ENCODE measurements at regions of chr22 and their contacts with region 1.

Region 1: GRCh38 chr22:30212363-30212995 is 34.1 kb downstream of the LIF start:
- DNase-seq: peak; percentile 93
- H3K4me3 Mint-ChIP-seq: no peak overlapping the region
- H3K27ac Mint-ChIP-seq: peak overlapping the region; percentile 99
- H3K4me1 Mint-ChIP-seq: peaks cover 78% of the 10 kb centered on the region
- H3K27me3 Mint-ChIP-seq: no peaks in the 10 kb centered on the region
- CTCF ChIP-seq: no peak

Region 2: DNA sequence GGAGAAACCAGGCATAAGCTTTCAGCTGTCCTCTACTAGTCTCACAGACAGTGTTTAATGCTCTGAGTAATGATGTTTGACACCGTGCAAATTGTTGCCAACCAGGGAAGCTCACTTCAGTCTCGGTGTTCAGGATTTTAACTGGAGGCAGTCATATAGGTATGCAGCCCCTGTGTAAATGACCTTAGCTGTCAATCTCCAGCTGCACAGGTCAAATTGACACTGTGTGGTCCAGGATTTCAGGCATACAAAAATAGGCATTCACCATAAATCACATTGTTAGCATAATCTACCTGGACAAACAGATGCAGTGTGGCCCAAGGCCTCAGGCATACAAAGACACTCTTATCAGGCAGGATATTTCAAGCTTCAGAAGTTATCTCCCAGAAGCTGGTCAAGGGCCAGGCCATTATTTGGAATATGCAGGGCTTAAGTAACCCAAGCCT is 157.9 kb before region 1 on chr22:
- CTCF ChIA-PET with region 1: no interaction called
- intact Hi-C with region 1: no loop called
- DNase-seq: no peak
- H3K4me3 Mint-ChIP-seq: no peak overlapping the region
- H3K27ac Mint-ChIP-seq: no peak overlapping the region
- H3K4me1 Mint-ChIP-seq: no peaks in the 10 kb centered on the region
- H3K27me3 Mint-ChIP-seq: no peaks in the 10 kb centered on the region
- CTCF ChIP-seq: no peak

Region 3: GRCh38 chr22:30196141-30196879 is 16.2 kb before region 1 on chr22:
- CTCF ChIA-PET with region 1: interaction called, 16 read pairs
- intact Hi-C with region 1: loop called (anchors 1 kb)
- DNase-seq: peak; percentile 97
- H3K4me3 Mint-ChIP-seq: peak overlapping the region; percentile 28
- H3K27ac Mint-ChIP-seq: peak overlapping the region; percentile 98
- H3K4me1 Mint-ChIP-seq: peaks cover 53% of the 10 kb centered on the region
- H3K27me3 Mint-ChIP-seq: no peaks in the 10 kb centered on the region
- CTCF ChIP-seq: no peak

Region 4: GRCh38 chr22:30235687-30236170 is 23.2 kb after region 1 on chr22:
- CTCF ChIA-PET with region 1: interaction called, 24 read pairs
- intact Hi-C with region 1: loop called (anchors 1 kb)
- DNase-seq: peak; percentile 90
- H3K4me3 Mint-ChIP-seq: peak overlapping the region; percentile 15
- H3K27ac Mint-ChIP-seq: peak overlapping the region; percentile 98
- H3K4me1 Mint-ChIP-seq: peaks cover 58% of the 10 kb centered on the region
- H3K27me3 Mint-ChIP-seq: no peaks in the 10 kb centered on the region
- CTCF ChIP-seq: no peak

Region 5: GRCh38 chr22:30253205-30253852 is 40.9 kb after region 1 on chr22:
- CTCF ChIA-PET with region 1: interaction called, 8 read pairs
- intact Hi-C with region 1: loop called (anchors 2 kb)
- DNase-seq: peak; percentile 95
- H3K4me3 Mint-ChIP-seq: peak overlapping the region; percentile 94
- H3K27ac Mint-ChIP-seq: peak overlapping the region; percentile 98
- H3K4me1 Mint-ChIP-seq: peaks cover 70% of the 10 kb centered on the region
- H3K27me3 Mint-ChIP-seq: no peaks in the 10 kb centered on the region
- CTCF ChIP-seq: no peak

Region 6: GRCh38 chr22:30265823-30266444 is 53.5 kb after region 1 on chr22:
- CTCF ChIA-PET with region 1: no interaction called
- intact Hi-C with region 1: no loop called
- DNase-seq: no peak
- H3K4me3 Mint-ChIP-seq: no peak overlapping the region
- H3K27ac Mint-ChIP-seq: peak overlapping the region; percentile 62
- H3K4me1 Mint-ChIP-seq: peaks cover 25% of the 10 kb centered on the region
- H3K27me3 Mint-ChIP-seq: no peaks in the 10 kb centered on the region
- CTCF ChIP-seq: no peak

Measured in Calu3 (cell line).